Activated B cell treated with CpG ODN at 0.5 μM for 24 hours (primary cell): ENCODE measurements at regions of chr4 and their contacts with region 1.

Region 1: GRCh38 chr4:48340965-48341775 is at the start of gene SLAIN2:
- DNase-seq: peak; percentile 100
- ATAC-seq: peak; percentile 88
- H3K4me3 Mint-ChIP-seq: peak within 1 kb of the TSS; percentile 97
- H3K27ac Mint-ChIP-seq: peak within 1 kb of the TSS; percentile 96
- H3K4me1 Mint-ChIP-seq: peaks cover 44% of the 10 kb centered on the region
- H3K27me3 Mint-ChIP-seq: no peaks in the 10 kb centered on the region
- CTCF ChIP-seq: no peak
- total RNA-seq, gene SLAIN2: 50.8 and 62.1 TPM in 2 replicates

Region 2: GRCh38 chr4:47485047-47485692 is 856.0 kb before region 1 on chr4 and contains the start of gene ATP10D:
- CTCF ChIA-PET with region 1: no interaction called
- POLR2A ChIA-PET with region 1: no interaction called
- intact Hi-C with region 1: loop called (anchors 2 kb)
- DNase-seq: peak; percentile 82
- ATAC-seq: peak; percentile 96
- H3K4me3 Mint-ChIP-seq: peak within 1 kb of the TSS; percentile 99
- H3K27ac Mint-ChIP-seq: peak within 1 kb of the TSS; percentile 99
- H3K4me1 Mint-ChIP-seq: peaks cover 64% of the 10 kb centered on the region
- H3K27me3 Mint-ChIP-seq: no peaks in the 10 kb centered on the region
- CTCF ChIP-seq: no peak
- total RNA-seq, gene ATP10D: 26.2 and 31.6 TPM in 2 replicates

Region 3: GRCh38 chr4:48016141-48017103 is 324.7 kb before region 1 on chr4 and contains the starts of genes CNGA1 and NIPAL1:
- CTCF ChIA-PET with region 1: no interaction called
- POLR2A ChIA-PET with region 1: no interaction called
- intact Hi-C with region 1: loop called (anchors 5 kb)
- DNase-seq: peak; percentile 70
- ATAC-seq: peak; percentile 92
- H3K4me3 Mint-ChIP-seq: peak within 1 kb of the TSS; percentile 83
- H3K27ac Mint-ChIP-seq: no peak within 1 kb of the TSS
- H3K4me1 Mint-ChIP-seq: peaks cover 13% of the 10 kb centered on the region
- H3K27me3 Mint-ChIP-seq: peaks cover 40% of the 10 kb centered on the region
- CTCF ChIP-seq: no peak
- total RNA-seq, gene CNGA1: not detected in 2 replicates
- total RNA-seq, gene NIPAL1: 0.69 and 0.73 TPM in 2 replicates

Region 4: DNA sequence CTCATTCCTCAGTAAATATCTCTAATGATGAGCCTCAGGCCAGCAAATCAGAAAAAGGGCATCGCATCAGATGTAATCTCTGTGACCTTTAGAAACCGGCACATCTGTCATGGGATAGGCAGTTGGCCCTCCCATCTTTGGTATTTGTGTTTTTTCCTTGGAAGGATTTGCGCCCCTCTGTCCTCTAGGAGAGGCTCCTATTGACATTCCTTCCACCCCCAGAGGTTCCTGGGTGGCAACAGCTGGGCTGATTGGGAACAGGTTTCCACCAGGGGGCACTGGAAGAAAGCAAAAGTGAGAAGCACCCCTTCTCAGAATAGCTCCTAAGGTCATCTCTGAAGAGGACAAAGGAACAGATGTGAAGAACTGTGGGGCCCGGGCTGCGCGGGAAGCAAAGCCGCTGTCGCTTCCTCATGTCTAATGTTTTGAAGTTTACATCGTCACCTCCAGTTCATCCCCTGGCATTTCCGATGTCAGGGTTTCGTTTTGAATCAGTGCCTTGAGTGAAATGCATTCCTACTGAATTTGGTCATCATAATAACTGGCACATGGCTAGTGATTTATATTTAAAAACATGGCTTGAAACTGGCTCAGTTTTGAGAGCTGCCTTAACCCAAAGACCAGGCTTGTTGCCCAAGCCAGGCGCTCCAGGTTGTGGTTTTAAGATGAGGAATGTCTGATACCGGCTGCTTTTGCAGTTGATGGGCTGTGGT is 213.3 kb before region 1 on chr4:
- CTCF ChIA-PET with region 1: interaction called, 3 read pairs
- POLR2A ChIA-PET with region 1: no interaction called
- intact Hi-C with region 1: loop called (anchors 5 kb)
- DNase-seq: peak; percentile 19
- ATAC-seq: peak; percentile 74
- H3K4me3 Mint-ChIP-seq: peak overlapping the region; percentile 2
- H3K27ac Mint-ChIP-seq: no peak overlapping the region
- H3K4me1 Mint-ChIP-seq: peaks cover 10% of the 10 kb centered on the region
- H3K27me3 Mint-ChIP-seq: no peaks in the 10 kb centered on the region
- CTCF ChIP-seq: no peak

Region 5: GRCh38 chr4:48212165-48212564 is 129.0 kb before region 1 on chr4:
- CTCF ChIA-PET with region 1: no interaction called
- POLR2A ChIA-PET with region 1: no interaction called
- intact Hi-C with region 1: loop called (anchors 1 kb)
- DNase-seq: no peak
- ATAC-seq: peak; percentile 73
- H3K4me3 Mint-ChIP-seq: peak overlapping the region; percentile 68
- H3K27ac Mint-ChIP-seq: peak overlapping the region; percentile 83
- H3K4me1 Mint-ChIP-seq: peaks cover 38% of the 10 kb centered on the region
- H3K27me3 Mint-ChIP-seq: no peaks in the 10 kb centered on the region
- CTCF ChIP-seq: no peak

Region 6: DNA sequence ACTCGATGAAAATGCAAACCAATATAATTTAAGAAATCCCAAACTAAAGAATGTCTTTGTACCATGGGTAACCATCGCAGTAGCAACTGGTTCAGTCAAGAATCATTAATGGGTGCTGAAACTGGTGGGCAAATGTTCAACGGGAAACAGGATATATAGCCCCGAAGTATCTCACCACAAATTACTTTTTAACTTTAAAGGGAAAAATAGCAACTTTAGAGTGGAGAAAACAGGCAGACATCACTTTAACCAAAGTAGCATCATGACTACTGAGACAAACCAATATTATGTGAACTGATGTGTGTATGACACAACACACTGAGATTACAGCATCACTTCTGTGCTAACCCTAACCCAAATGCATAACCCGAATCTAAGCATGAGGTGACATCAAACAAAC is 33.6 kb before region 1 on chr4:
- CTCF ChIA-PET with region 1: no interaction called
- POLR2A ChIA-PET with region 1: no interaction called
- intact Hi-C with region 1: no loop called
- DNase-seq: no peak
- ATAC-seq: no peak
- H3K4me3 Mint-ChIP-seq: no peak overlapping the region
- H3K27ac Mint-ChIP-seq: no peak overlapping the region
- H3K4me1 Mint-ChIP-seq: no peaks in the 10 kb centered on the region
- H3K27me3 Mint-ChIP-seq: peaks cover 3% of the 10 kb centered on the region
- CTCF ChIP-seq: no peak

Region 7: DNA sequence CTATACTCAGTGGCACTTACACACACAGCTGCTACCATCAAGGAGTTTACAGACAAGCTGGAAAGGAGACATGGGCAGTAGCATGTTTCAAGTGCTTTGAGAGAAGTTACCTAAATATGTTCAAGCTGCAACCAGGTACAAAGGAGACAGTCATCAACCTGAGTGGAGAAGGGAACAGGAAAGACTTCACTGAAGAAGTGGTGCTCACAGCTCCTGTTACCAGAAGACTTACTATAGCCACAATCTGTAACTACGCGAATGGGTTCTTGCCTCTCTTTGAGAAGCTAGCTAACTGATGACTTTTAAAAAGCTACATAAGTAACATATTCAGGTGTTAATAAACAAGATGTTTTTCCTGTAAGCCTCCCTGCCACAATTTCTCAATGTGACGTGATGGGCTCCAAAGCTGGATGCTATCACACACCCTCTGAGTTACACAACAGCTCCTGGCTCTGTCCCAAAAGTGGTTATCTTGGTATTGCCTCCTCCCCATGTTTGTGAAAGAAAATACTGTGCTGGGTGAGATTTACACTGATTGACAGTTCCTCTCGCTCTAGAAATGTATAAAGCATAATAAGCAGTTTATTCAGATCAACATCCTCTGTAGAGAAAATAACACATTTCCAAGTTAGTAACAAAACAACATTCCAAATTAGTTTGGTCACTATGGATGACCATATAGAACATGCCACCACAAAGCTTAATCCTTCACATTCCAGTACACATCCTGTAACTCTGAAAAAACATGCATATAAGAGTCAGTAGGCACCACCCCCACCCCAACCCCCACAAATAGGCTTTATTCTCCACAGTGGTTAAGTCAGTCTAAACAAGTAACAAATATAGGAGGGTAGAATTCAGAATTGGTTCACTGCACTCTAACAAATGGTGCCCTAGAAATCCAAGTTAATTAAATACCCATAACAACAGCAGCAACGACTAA is 357.1 kb after region 1 on chr4:
- CTCF ChIA-PET with region 1: no interaction called
- POLR2A ChIA-PET with region 1: interaction called, 11 read pairs
- intact Hi-C with region 1: no loop called
- DNase-seq: no peak
- ATAC-seq: no peak
- H3K4me3 Mint-ChIP-seq: no peak overlapping the region
- H3K27ac Mint-ChIP-seq: no peak overlapping the region
- H3K4me1 Mint-ChIP-seq: peaks cover 41% of the 10 kb centered on the region
- H3K27me3 Mint-ChIP-seq: no peaks in the 10 kb centered on the region
- CTCF ChIP-seq: no peak

Region 8: DNA sequence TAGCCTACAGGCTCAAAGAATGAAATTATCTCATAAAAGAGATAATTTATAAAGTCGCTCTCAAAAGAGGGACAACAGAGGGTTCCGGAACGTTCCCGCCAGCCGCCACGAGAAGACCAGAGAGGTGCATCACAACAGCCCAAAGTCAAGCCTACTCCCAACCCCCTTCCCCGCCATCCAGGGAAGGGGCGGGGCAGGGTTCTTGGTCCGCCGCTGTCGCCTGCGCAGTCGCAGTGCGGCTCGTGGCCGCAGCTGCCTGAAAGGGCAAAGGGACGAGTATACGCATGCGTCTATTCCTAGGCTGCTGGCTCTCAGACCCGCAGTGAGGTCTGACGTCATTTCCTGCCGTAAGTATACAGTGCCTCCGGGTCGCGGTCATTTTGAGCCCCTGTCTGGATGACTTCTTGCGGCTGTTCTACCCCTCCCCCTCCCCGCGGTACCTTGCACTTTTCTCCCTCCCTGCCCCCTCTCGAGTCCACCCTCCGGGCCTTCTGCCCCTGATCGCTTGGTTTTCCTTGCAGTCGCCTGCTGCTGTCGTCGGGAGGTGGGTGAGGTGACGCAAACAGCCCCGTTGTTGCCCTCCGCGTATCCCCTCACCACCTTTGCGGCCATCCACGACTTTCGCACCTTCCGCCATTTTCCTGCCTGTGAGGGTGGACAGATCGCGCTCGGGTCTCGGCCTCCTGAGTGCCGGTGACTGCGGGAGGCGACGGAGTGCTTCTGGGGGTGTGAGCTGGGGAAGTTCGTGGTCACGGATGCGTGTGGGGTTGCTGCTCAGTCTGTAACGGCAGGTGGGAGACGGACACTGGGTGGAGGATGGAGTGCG is 489.7 kb after region 1 on chr4 and contains the start of gene OCIAD1:
- CTCF ChIA-PET with region 1: no interaction called
- POLR2A ChIA-PET with region 1: interaction called, 3 read pairs
- intact Hi-C with region 1: loop called (anchors 2 kb)
- DNase-seq: peak; percentile 82
- ATAC-seq: peak; percentile 94
- H3K4me3 Mint-ChIP-seq: peak within 1 kb of the TSS; percentile 100
- H3K27ac Mint-ChIP-seq: peak within 1 kb of the TSS; percentile 100
- H3K4me1 Mint-ChIP-seq: peaks cover 28% of the 10 kb centered on the region
- H3K27me3 Mint-ChIP-seq: no peaks in the 10 kb centered on the region
- CTCF ChIP-seq: no peak
- total RNA-seq, gene OCIAD1: 100 and 104 TPM in 2 replicates